Spleen (tissue), 13 donors: ENCODE measurements at regions of chr13 and their contacts with region 1.

Region 1: GRCh38 chr13:32310134-32310706 is 4.9 kb downstream of the ZAR1L start:
- DNase-seq: no peak
- H3K4me3 ChIP-seq: peak overlapping the region in 3 of 8 donors; percentile 4 to 44 (median 19)
- H3K27ac ChIP-seq: peak overlapping the region in 1 of 8 donors; percentile 45
- H3K4me1 ChIP-seq: peaks cover 0 to 25% (median 11%) of the 10 kb centered on the region in 6 donors
- H3K27me3 ChIP-seq: no peaks in the 10 kb centered on the region
- CTCF ChIP-seq: peak; percentile 54 to 87 (median 76)
- POLR2A ChIP-seq: no peak

Region 2: GRCh38 chr13:31909864-31910551 is 400.2 kb before region 1 on chr13:
- intact Hi-C with region 1: loop called (anchors 5 kb)
- DNase-seq: no peak
- H3K4me3 ChIP-seq: no peak overlapping the region
- H3K27ac ChIP-seq: peak overlapping the region in 3 of 8 donors; percentile 7 to 53 (median 28)
- H3K4me1 ChIP-seq: peaks cover 5 to 42% (median 21%) of the 10 kb centered on the region in 6 donors
- H3K27me3 ChIP-seq: no peaks in the 10 kb centered on the region
- CTCF ChIP-seq: peak; percentile 47 to 88 (median 79)
- POLR2A ChIP-seq: no peak

Region 3: DNA sequence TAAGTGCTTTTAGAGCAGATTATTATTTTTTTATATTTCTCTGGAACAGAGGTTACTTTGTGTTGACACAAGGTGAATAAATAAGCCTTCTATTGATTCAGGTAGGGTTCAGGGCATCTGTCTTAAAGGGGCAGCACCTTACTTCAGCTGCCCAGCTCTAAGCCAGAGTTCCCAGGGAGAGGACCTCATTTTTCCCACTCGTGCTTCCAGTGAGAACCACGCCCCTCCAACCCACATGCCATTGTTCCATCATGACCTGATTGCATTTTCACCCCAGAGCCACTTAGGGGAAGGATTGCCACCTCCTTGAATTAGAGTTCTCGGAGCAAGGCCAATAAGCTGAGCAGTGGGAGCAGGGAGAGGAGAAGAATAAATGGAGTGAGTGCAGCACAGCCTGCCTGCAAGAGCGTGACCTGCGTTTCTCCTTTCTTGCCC is 383.0 kb before region 1 on chr13:
- intact Hi-C with region 1: no loop called
- DNase-seq: no peak
- H3K4me3 ChIP-seq: no peak overlapping the region
- H3K27ac ChIP-seq: no peak overlapping the region
- H3K4me1 ChIP-seq: peaks cover 0 to 36% (median 13%) of the 10 kb centered on the region in 6 donors
- H3K27me3 ChIP-seq: no peaks in the 10 kb centered on the region
- CTCF ChIP-seq: no peak
- POLR2A ChIP-seq: no peak

Region 4: GRCh38 chr13:32019612-32020233 is 290.5 kb before region 1 on chr13:
- intact Hi-C with region 1: loop called (anchors 10 kb)
- DNase-seq: no peak
- H3K4me3 ChIP-seq: no peak overlapping the region
- H3K27ac ChIP-seq: no peak overlapping the region
- H3K4me1 ChIP-seq: peaks cover 0 to 32% (median 3%) of the 10 kb centered on the region in 6 donors
- H3K27me3 ChIP-seq: no peaks in the 10 kb centered on the region
- CTCF ChIP-seq: peak in 10 of 11 experiments; percentile 13 to 76 (median 60)
- POLR2A ChIP-seq: no peak

Region 5: DNA sequence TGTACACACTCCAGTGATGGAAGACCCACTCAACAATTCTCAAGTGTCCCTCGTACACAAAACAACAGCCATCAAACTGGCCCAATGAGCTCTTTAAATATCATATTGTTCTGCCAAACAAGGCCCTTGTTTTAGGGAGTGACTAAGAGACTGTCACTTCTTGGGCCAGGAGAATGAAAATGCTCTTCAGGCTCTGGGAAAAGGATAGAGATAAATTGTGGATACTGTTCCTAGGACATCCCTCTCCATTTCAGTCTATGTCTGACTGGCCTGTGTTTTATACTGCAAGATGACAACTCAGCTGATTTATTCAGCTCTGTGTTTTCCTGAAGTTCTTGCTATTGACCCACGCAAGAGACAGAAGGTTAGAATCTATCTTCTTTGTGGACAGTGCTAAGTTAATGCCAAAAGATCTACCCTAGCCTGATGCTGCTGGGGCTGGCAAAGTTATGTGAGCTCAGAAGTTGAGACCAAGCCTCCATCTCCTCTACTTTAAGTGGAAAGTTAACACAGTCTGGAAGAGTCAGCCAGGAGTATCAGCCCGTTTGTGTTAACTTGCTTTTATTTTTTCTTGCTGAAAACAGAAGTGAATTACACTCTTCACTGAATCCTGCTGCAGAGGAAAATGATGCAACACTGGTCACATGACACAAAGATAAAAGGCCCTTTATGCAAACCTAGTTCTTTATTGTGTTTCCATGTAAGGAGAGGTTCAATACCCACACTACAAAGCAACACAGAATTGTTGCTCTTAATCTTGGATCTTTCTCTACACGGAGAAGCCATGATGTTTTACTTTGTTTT is 264.0 kb before region 1 on chr13:
- intact Hi-C with region 1: no loop called
- DNase-seq: no peak
- H3K4me3 ChIP-seq: no peak overlapping the region
- H3K27ac ChIP-seq: peak overlapping the region in 7 of 8 donors; percentile 36 to 81 (median 59)
- H3K4me1 ChIP-seq: peaks cover 6 to 67% (median 36%) of the 10 kb centered on the region in 6 donors
- H3K27me3 ChIP-seq: no peaks in the 10 kb centered on the region
- CTCF ChIP-seq: no peak
- POLR2A ChIP-seq: no peak